Activated B cell treated with CpG ODN at 0.5 μM for 24 hours (primary cell): ENCODE measurements at regions of chr22 and their contacts with region 1.

Region 1: GRCh38 chr22:37676736-37677492 is 1.5 kb downstream of the LGALS1 start:
- DNase-seq: peak; percentile 86
- ATAC-seq: peak; percentile 83
- H3K4me3 Mint-ChIP-seq: peak overlapping the region; percentile 84
- H3K27ac Mint-ChIP-seq: peak overlapping the region; percentile 91
- H3K4me1 Mint-ChIP-seq: peaks cover 66% of the 10 kb centered on the region
- H3K27me3 Mint-ChIP-seq: no peaks in the 10 kb centered on the region
- CTCF ChIP-seq: no peak

Region 2: DNA sequence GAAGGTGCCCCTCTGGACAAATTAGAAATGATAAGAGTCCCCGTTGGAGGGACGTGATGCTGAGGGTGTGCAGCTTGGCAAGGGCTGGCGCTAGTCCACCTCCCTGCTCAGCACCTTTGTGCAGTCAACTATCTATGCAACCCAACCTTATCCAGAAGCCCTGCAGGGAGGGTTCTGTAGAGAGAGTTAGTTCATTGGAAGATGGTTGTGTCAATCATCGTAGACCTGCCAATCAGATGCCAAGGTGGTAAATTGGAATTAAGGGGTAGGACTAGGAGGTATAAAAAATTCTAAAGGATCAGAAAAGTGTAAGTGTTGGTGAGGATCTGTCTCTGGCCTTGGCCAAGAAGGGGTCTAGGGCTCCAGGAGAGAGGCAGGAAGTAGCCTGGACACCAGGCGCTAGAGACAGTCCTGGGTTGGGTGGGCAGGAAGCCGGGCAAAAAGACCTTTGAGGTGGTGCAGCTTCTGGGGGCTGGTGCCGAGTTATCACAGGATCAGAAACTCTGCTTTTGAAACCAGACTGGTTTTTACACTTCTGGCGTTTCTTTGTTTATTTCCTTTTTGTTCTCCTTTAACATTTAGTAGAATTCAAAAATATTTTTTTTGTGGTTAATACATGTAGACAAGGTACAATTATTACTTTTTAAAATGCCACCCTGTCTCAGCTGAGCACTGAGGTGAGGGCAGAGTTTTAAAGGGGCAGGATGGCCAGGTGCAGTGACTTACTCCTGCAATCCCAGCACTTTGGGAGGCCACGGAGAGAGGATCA is 490.5 kb before region 1 on chr22:
- CTCF ChIA-PET with region 1: no interaction called
- POLR2A ChIA-PET with region 1: no interaction called
- intact Hi-C with region 1: no loop called
- DNase-seq: no peak
- ATAC-seq: peak; percentile 61
- H3K4me3 Mint-ChIP-seq: no peak overlapping the region
- H3K27ac Mint-ChIP-seq: no peak overlapping the region
- H3K4me1 Mint-ChIP-seq: peaks cover 9% of the 10 kb centered on the region
- H3K27me3 Mint-ChIP-seq: no peaks in the 10 kb centered on the region
- CTCF ChIP-seq: no peak

Region 3: DNA sequence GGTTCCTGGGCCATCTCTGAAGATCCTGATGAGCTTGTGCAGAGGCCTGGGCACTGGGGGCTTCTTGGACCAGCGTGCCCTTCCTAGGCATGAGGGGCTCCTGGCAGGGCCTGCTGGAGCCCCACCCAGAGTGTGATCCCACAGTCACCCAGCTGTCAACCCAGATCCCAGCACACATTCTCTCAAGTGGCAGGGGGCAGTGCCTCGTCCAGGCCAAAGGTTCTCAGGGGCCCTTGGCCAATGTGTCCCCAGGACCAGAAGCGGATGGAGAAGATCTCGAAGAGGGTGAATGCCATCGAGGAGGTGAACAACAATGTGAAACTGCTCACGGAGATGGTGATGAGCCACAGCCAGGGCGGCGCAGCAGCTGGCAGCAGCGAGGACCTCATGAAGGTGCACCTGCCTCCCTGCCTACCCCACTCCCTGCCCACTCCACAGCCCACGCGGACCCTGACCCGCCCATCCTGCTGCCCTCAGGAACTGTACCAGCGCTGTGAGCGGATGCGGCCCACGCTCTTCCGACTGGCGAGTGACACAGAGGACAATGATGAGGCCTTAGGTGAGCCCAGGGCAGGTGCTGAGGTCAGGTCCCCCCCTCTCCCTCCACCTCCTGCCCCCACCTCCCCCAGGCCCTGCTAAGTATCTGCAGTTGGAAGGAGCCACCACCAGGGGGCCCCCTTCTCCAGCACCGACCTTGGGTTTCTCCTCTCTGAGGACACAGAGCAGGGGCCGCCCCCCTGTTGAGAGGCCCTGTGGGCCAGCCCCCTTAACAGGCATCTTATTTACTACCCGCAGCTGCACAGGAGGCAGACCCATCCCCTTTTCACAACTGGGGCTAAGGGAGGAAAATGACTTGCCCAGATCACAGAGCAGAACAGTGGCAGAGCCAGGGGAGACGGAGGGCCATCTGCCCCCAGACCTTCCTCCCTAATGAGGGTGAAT is 53.6 kb before region 1 on chr22:
- CTCF ChIA-PET with region 1: interaction called, 49 read pairs
- POLR2A ChIA-PET with region 1: interaction called, 45 read pairs
- intact Hi-C with region 1: loop called (anchors 1 kb)
- DNase-seq: peak; percentile 73
- ATAC-seq: peak; percentile 80
- H3K4me3 Mint-ChIP-seq: peak overlapping the region; percentile 24
- H3K27ac Mint-ChIP-seq: peak overlapping the region; percentile 84
- H3K4me1 Mint-ChIP-seq: peaks cover 64% of the 10 kb centered on the region
- H3K27me3 Mint-ChIP-seq: no peaks in the 10 kb centered on the region
- CTCF ChIP-seq: peak; percentile 38

Region 4: GRCh38 chr22:37633625-37634416 is 43.1 kb before region 1 on chr22:
- CTCF ChIA-PET with region 1: interaction called, 49 read pairs
- POLR2A ChIA-PET with region 1: interaction called, 64 read pairs
- intact Hi-C with region 1: loop called (anchors 1 kb)
- DNase-seq: peak; percentile 69
- ATAC-seq: peak; percentile 78
- H3K4me3 Mint-ChIP-seq: peak overlapping the region; percentile 74
- H3K27ac Mint-ChIP-seq: peak overlapping the region; percentile 93
- H3K4me1 Mint-ChIP-seq: peaks cover 67% of the 10 kb centered on the region
- H3K27me3 Mint-ChIP-seq: no peaks in the 10 kb centered on the region
- CTCF ChIP-seq: no peak

Region 5: DNA sequence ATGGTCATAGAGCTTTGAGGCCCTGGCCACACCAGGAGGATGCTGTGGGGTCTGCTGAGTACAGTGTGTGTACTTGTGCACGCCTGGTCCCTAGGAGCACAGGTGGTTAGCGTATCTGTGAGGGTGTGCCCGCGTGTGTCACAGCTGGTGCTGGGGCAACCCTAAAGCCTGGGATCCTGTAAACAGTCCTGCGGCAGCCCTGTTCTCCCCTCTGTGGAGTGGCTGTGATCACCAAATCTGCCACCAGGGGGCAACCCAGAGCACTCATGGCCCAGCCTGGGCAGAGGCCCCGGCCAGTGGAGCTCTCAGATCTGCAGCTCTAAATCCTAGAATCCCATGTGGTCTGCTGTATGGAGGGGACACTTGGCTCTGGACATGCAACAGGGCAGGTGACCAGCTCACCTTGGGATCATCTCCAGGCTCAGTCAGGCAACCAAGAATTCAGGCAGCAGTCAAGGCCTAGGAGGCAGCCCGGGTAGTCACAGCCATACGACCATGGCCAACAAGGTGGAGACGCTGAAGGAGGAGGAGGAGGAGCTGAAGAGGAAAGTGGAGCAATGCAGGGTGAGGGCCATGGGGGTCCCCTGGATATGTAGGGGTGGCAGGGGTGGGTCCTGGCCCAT is 33.6 kb before region 1 on chr22:
- CTCF ChIA-PET with region 1: interaction called, 163 read pairs
- POLR2A ChIA-PET with region 1: interaction called, 54 read pairs
- intact Hi-C with region 1: loop called (anchors 1 kb)
- DNase-seq: peak; percentile 85
- ATAC-seq: peak; percentile 80
- H3K4me3 Mint-ChIP-seq: peak overlapping the region; percentile 28
- H3K27ac Mint-ChIP-seq: peak overlapping the region; percentile 59
- H3K4me1 Mint-ChIP-seq: peaks cover 34% of the 10 kb centered on the region
- H3K27me3 Mint-ChIP-seq: no peaks in the 10 kb centered on the region
- CTCF ChIP-seq: peak; percentile 64

Region 6: GRCh38 chr22:37664249-37665101 is 12.4 kb before region 1 on chr22:
- CTCF ChIA-PET with region 1: interaction called, 107 read pairs
- POLR2A ChIA-PET with region 1: interaction called, 181 read pairs
- intact Hi-C with region 1: loop called (anchors 1 kb)
- DNase-seq: no peak
- ATAC-seq: no peak
- H3K4me3 Mint-ChIP-seq: no peak overlapping the region
- H3K27ac Mint-ChIP-seq: no peak overlapping the region
- H3K4me1 Mint-ChIP-seq: peaks cover 36% of the 10 kb centered on the region
- H3K27me3 Mint-ChIP-seq: no peaks in the 10 kb centered on the region
- CTCF ChIP-seq: no peak

Region 7: DNA sequence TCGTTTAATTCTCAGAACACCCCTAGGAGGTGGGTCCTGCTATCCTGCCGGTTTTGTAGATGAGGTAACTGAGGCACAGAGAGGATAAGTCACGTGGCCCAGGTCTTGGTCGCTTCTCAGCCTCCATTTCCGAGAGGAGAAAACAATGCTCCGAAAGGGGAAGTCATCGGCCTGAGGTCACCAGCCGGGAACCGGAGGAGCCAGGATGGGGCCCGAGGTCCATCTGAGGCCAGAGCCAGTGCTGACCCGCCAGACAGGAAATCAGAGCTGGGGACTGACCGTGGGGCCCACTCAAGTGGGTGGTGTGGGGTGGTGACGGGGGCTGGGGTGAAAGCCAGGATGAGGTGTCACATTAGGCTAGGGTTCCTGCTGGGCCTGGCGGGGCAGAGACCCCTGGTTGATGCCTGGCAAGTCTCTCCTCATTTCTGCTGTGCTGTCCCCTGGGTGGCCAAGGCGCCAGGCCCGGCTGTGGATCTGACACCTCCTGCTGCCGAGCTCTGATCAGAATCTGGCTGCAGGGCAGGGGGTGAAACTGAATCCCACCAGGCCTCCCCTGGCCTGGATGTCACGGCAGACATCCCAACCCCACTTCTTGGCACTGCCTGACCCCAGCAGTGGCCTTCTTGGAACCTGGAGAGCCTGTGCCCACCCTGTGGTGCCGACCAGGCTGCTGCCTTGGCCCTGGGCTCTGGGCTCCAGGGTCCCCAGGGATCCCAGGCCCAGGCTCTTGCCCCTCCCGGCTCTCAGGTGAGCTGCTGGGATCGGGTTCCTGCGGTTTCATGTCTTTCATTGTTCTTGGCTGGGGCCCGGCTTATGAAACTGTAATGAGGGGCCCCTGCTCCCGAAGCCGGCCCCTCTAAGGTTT is 31.9 kb after region 1 on chr22:
- CTCF ChIA-PET with region 1: no interaction called
- POLR2A ChIA-PET with region 1: no interaction called
- intact Hi-C with region 1: no loop called
- DNase-seq: no peak
- ATAC-seq: no peak
- H3K4me3 Mint-ChIP-seq: no peak overlapping the region
- H3K27ac Mint-ChIP-seq: no peak overlapping the region
- H3K4me1 Mint-ChIP-seq: no peaks in the 10 kb centered on the region
- H3K27me3 Mint-ChIP-seq: no peaks in the 10 kb centered on the region
- CTCF ChIP-seq: no peak

Region 8: DNA sequence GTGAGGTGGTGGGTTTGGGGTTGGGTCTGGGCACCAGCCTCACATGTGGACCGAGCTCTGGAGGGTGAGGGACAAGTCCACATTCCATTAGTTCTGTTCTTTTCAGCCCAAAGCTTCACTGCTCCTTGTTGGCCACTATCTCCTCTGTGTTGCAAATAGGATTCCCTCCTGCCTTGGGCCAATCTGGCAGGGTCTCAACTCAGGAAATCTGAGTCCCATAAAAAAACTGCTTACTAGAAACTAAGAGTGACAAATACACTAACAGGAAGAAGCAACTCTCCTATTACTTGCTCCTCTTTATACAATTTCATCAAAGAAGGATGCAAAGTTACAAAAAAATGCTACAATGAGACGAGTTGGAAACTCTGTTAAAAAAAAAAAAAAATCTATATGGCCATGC is 706.5 kb after region 1 on chr22:
- CTCF ChIA-PET with region 1: no interaction called
- POLR2A ChIA-PET with region 1: no interaction called
- intact Hi-C with region 1: no loop called
- DNase-seq: no peak
- ATAC-seq: no peak
- H3K4me3 Mint-ChIP-seq: no peak overlapping the region
- H3K27ac Mint-ChIP-seq: peak overlapping the region; percentile 53
- H3K4me1 Mint-ChIP-seq: peaks cover 58% of the 10 kb centered on the region
- H3K27me3 Mint-ChIP-seq: no peaks in the 10 kb centered on the region
- CTCF ChIP-seq: no peak